Heart left ventricle (tissue), 16 donors: ENCODE measurements at regions of chr20 and their contacts with region 1.

Region 1: DNA sequence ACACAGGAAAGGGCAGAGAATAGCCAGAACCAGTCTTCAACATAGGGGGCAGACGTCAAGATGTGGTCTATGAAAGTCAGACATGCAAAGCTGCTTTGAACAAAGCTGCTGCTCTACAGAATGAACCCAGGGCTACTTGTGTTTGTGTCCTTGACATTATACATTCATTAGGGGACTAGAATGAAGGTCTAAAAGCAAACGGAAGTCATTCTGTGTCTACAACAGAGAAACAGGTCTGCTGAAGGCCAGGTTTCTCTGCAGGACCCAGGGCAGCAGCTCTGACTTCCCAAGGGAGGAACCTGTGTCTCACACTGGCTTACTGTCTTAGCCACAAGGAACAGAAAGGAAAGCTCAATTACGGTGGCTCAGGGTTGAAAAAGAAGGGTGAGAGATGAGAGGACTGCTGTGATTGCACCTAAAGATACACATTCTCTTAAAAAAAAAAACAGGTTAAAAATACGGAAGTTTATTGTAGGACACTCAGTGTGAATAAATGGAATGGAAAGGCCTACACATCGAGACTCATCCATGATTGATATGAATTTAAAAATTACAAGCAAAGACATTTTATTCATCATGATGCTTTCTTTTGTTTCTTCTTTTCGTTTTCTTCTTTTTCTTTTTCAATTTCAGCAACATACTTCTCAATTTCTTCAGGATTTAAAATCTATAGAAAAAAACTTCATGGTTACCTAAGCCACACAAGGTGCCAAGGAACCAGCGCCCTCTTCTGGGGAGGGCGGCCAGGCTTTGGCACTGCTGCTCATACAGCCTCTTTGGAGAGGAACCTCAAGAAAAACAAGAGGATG is 6.7 kb downstream of the PSMA7 start:
- DNase-seq: peak in 3 of 5 donors; percentile 57 to 71 (median 61)
- ATAC-seq: peak in 3 of 4 donors; percentile 20 to 45 (median 37)
- H3K4me3 ChIP-seq: no peak overlapping the region
- H3K27ac ChIP-seq: no peak overlapping the region
- H3K4me1 ChIP-seq: peaks cover 7 to 59% (median 44%) of the 10 kb centered on the region in 12 donors
- H3K27me3 ChIP-seq: no peaks in the 10 kb centered on the region
- CTCF ChIP-seq: peak; percentile 64 to 90 (median 78)
- POLR2A ChIP-seq: no peak

Region 2: GRCh38 chr20:62019881-62020492 is 116.5 kb before region 1 on chr20:
- intact Hi-C with region 1: loop called in 9 of 10 experiments (anchors 5 kb)
- DNase-seq: peak; percentile 37 to 79 (median 75)
- ATAC-seq: peak; percentile 83 to 89 (median 86)
- H3K4me3 ChIP-seq: no peak overlapping the region
- H3K27ac ChIP-seq: peak overlapping the region in 5 of 12 donors; percentile 13 to 68 (median 29)
- H3K4me1 ChIP-seq: peaks cover 11 to 56% (median 32%) of the 10 kb centered on the region in 12 donors
- H3K27me3 ChIP-seq: no peaks in the 10 kb centered on the region
- CTCF ChIP-seq: no peak
- POLR2A ChIP-seq: no peak

Region 3: DNA sequence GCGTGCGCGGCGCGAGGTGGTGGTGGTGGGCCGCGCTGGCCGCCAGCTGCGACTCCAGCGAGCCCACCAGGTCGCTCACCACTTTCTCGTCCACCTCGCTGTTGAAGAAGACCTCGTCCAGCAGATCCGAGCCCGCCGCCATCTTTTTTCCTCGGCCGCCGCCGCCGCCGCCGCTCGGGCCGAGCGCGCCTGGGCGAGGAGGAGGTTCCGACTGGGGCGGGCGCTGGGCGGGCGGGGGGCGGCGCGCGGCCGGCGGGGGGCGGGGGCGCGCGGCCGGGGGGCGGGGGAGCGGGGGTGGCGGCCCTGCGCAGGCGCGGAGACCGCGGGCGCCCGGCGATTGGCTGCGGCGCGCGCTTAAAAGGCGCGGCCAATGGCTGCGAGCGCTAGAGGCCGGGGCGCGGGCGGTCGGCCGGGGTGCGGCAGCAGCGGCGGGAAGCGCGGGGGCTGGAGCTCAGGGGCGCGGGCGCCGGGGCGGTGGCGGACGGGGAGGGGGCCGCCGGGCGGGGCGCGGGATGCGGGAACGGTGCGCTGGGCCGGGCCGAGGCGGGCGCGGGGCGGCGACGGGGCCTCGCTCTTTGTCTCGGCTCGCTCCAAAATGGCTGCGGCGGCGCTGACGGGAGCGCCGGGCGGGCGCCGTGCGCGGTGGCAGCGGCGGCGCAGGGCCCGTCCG is 70.7 kb before region 1 on chr20 and contains the start of gene TAF4:
- intact Hi-C with region 1: loop called in 6 of 10 experiments (anchors 5 kb)
- DNase-seq: peak; percentile 73 to 89 (median 81)
- ATAC-seq: peak; percentile 54 to 65 (median 58)
- H3K4me3 ChIP-seq: peak within 1 kb of the TSS; percentile 60 to 87 (median 70)
- H3K27ac ChIP-seq: peak within 1 kb of the TSS; percentile 74 to 94 (median 89)
- H3K4me1 ChIP-seq: peaks cover 2 to 41% (median 30%) of the 10 kb centered on the region in 12 donors
- H3K27me3 ChIP-seq: no peaks in the 10 kb centered on the region
- CTCF ChIP-seq: no peak
- POLR2A ChIP-seq: peak in 1 of 2 donors; percentile 85
- total RNA-seq, gene TAF4: 7.8 to 37.7 (median 11.4) TPM

Region 4: GRCh38 chr20:62087311-62088236 is 48.9 kb before region 1 on chr20:
- intact Hi-C with region 1: no loop called
- DNase-seq: no peak
- ATAC-seq: peak in 1 of 4 donors; percentile 39
- H3K4me3 ChIP-seq: no peak overlapping the region
- H3K27ac ChIP-seq: no peak overlapping the region
- H3K4me1 ChIP-seq: no peaks in the 10 kb centered on the region
- H3K27me3 ChIP-seq: peaks cover 0 to 4% (median 0%) of the 10 kb centered on the region in 9 donors
- CTCF ChIP-seq: no peak
- POLR2A ChIP-seq: no peak